ENCODE measurements at regions of chr3 and their contacts with region 1.

Region 1: GRCh38 chr3:133828581-133829309 is 23.1 kb downstream of the SRPRB start:
- DNase-seq: peak; percentile 45 to 49
- ATAC-seq: peak; percentile 39 to 85 (median 74)
- H3K4me3 ChIP-seq: no peak overlapping the region
- H3K27ac ChIP-seq: peak overlapping the region in 6 of 10 donors; percentile 20 to 59 (median 54)
- H3K4me1 ChIP-seq: peaks cover 0 to 22% (median 11%) of the 10 kb centered on the region in 9 donors
- H3K27me3 ChIP-seq: no peaks in the 10 kb centered on the region
- CTCF ChIP-seq: no peak

Region 2: GRCh38 chr3:133663569-133664313 is 165.0 kb before region 1 on chr3:
- intact Hi-C with region 1: no loop called
- DNase-seq: no peak
- ATAC-seq: peak in 6 of 8 donors; percentile 28 to 75 (median 38)
- H3K4me3 ChIP-seq: no peak overlapping the region
- H3K27ac ChIP-seq: no peak overlapping the region
- H3K4me1 ChIP-seq: peaks cover 0 to 32% (median 25%) of the 10 kb centered on the region in 9 donors
- H3K27me3 ChIP-seq: no peaks in the 10 kb centered on the region
- CTCF ChIP-seq: peak; percentile 23 to 64 (median 57)

Region 3: DNA sequence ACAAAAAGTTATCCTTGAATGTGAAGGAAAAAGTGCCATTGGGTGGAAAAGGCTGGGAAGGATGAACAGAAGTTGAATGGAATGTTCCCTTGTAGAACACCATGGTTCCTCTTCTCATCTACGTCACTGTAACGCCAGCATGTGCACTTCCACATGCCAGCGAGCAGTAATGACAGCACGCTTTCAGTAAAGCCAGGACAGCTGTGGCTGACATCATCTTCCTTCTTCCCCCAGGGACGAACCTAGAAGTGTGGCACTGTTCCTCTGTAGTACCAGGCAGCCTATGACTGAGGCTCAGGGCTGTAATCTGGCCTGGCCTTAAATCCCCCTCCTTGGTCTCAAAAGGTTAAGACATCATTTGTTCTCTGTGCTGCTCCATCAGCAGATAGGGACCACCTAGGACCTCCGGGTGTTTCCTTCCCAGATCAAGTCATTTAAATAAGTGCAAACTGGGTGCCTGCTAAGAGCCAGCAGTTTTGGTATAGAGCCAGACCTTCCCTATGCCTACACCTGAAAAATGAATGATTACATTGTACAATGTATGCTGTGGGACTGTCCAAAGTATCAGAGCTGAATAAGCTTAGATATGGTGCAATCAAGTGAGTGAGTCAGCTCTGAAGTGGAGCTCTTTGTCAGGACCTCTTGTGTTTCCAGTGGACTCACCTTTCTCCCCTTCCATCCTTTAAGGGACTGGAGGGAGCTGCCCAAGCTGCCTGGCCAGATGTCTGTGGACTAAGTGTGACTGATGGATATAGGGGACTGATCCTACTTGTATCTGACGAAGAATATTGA is 28.8 kb before region 1 on chr3:
- intact Hi-C with region 1: no loop called
- DNase-seq: no peak
- ATAC-seq: peak in 5 of 8 donors; percentile 21 to 78 (median 67)
- H3K4me3 ChIP-seq: no peak overlapping the region
- H3K27ac ChIP-seq: no peak overlapping the region
- H3K4me1 ChIP-seq: peaks cover 0 to under 1% (median 0%) of the 10 kb centered on the region in 9 donors
- H3K27me3 ChIP-seq: peaks cover 0 to 24% (median 15%) of the 10 kb centered on the region in 7 donors
- CTCF ChIP-seq: no peak

Region 4: GRCh38 chr3:133895208-133896001 is 66.7 kb after region 1 on chr3 and contains the start of gene RAB6B:
- intact Hi-C with region 1: loop called in 5 of 10 experiments (anchors 5 kb)
- DNase-seq: peak; percentile 46 to 64
- ATAC-seq: peak; percentile 70 to 89 (median 82)
- H3K4me3 ChIP-seq: peak within 1 kb of the TSS; percentile 44 to 90 (median 70)
- H3K27ac ChIP-seq: peak within 1 kb of the TSS in 9 of 10 donors; percentile 31 to 73 (median 51)
- H3K4me1 ChIP-seq: peaks cover 14 to 49% (median 23%) of the 10 kb centered on the region in 9 donors
- H3K27me3 ChIP-seq: peaks cover 0 to 52% (median 8%) of the 10 kb centered on the region in 7 donors
- CTCF ChIP-seq: no peak
- total RNA-seq, gene RAB6B: 39.2 to 73.8 (median 47.4) TPM

Measured in heart right ventricle (tissue), 16 donors.